MCF 10A (cell line): ENCODE measurements at regions of chr3 and their contacts with region 1.

Region 1: DNA sequence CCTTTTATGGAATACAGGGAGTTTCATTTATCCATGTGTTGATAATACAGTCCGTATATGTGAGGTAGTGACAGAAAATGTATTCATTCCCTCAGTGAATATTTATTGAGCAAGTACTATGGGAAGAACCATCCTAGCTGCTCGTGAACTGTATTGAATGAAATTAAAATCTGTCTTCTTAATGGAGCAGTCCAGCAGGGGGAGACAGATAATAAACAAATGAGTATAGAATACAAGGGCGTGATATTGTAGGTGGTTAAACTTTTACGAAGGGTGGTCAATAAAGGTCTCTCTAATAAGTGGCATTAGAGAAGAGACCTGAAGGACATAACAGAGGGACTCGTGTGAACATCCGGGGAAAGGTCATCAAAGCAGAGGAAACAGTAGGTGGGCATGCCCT is 62.7 kb upstream of the OSTN start:
- DNase-seq: peak; percentile 55
- H3K4me3 Mint-ChIP-seq: no peak overlapping the region
- H3K27ac Mint-ChIP-seq: no peak overlapping the region
- H3K4me1 Mint-ChIP-seq: no peaks in the 10 kb centered on the region
- H3K27me3 Mint-ChIP-seq: no peaks in the 10 kb centered on the region
- CTCF ChIP-seq: peak; percentile 38

Region 2: GRCh38 chr3:191094057-191094845 is 42.1 kb before region 1 on chr3:
- CTCF ChIA-PET with region 1: interaction called, 3 read pairs
- POLR2A ChIA-PET with region 1: no interaction called
- intact Hi-C with region 1: loop called (anchors 2 kb)
- DNase-seq: peak; percentile 78
- H3K4me3 Mint-ChIP-seq: no peak overlapping the region
- H3K27ac Mint-ChIP-seq: peak overlapping the region; percentile 78
- H3K4me1 Mint-ChIP-seq: peaks cover 9% of the 10 kb centered on the region
- H3K27me3 Mint-ChIP-seq: no peaks in the 10 kb centered on the region
- CTCF ChIP-seq: no peak

Region 3: DNA sequence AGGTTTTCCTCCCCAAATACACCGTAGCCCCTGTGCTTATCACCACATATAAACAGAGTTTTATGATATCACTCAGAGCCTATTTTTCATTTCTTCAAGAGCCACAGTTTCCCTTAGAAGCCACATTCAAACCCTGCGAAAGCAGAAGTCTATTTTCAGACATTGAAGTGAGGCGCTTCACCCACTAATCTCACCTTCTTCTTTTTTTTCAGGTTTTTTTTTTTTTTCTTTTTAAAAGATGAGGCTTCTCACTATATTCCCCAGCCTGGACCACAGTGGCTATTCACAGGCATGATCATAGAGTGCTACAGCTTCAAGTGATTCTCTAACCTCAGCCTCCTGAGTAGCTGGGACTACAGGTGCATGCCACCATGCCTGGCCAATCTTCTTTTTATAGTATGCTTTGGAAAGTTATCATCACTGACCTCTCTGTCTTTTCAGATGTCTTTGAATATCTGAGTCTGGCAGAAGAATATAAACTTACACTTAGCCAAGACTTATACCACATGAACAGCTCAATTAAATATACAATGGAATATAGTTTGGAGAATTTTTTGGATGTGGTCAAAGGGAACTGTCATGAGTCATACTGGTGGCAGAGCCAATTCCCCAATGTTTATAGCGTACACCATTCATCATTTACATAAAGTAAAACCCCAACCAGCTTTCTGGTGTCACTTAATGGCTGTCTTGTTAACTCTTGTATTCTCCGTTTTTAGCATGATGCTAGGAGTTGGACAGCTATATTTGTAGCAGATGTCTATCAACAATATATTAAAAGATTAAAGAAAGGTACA is 133.1 kb after region 1 on chr3:
- CTCF ChIA-PET with region 1: no interaction called
- POLR2A ChIA-PET with region 1: no interaction called
- intact Hi-C with region 1: no loop called
- DNase-seq: no peak
- H3K4me3 Mint-ChIP-seq: no peak overlapping the region
- H3K27ac Mint-ChIP-seq: no peak overlapping the region
- H3K4me1 Mint-ChIP-seq: no peaks in the 10 kb centered on the region
- H3K27me3 Mint-ChIP-seq: no peaks in the 10 kb centered on the region
- CTCF ChIP-seq: no peak

Region 4: GRCh38 chr3:191321019-191321767 is 184.8 kb after region 1 on chr3:
- CTCF ChIA-PET with region 1: no interaction called
- POLR2A ChIA-PET with region 1: no interaction called
- intact Hi-C with region 1: no loop called
- DNase-seq: no peak
- H3K4me3 Mint-ChIP-seq: no peak overlapping the region
- H3K27ac Mint-ChIP-seq: no peak overlapping the region
- H3K4me1 Mint-ChIP-seq: peaks cover 13% of the 10 kb centered on the region
- H3K27me3 Mint-ChIP-seq: no peaks in the 10 kb centered on the region
- CTCF ChIP-seq: no peak

Region 5: GRCh38 chr3:191397771-191398170 is 261.4 kb after region 1 on chr3:
- CTCF ChIA-PET with region 1: no interaction called
- POLR2A ChIA-PET with region 1: no interaction called
- intact Hi-C with region 1: loop called (anchors 5 kb)
- DNase-seq: no peak
- H3K4me3 Mint-ChIP-seq: no peak overlapping the region
- H3K27ac Mint-ChIP-seq: no peak overlapping the region
- H3K4me1 Mint-ChIP-seq: no peaks in the 10 kb centered on the region
- H3K27me3 Mint-ChIP-seq: no peaks in the 10 kb centered on the region
- CTCF ChIP-seq: no peak